Heart left ventricle (tissue), 16 donors: ENCODE measurements at regions of chr6 and their contacts with region 1.

Region 1: GRCh38 chr6:154276810-154277628 is 79.6 kb downstream of the IPCEF1 start:
- DNase-seq: no peak
- ATAC-seq: peak in 1 of 4 donors; percentile 53
- H3K4me3 ChIP-seq: peak overlapping the region in 1 of 12 donors; percentile 19
- H3K27ac ChIP-seq: no peak overlapping the region
- H3K4me1 ChIP-seq: peaks cover 0 to 19% (median 0%) of the 10 kb centered on the region in 12 donors
- H3K27me3 ChIP-seq: no peaks in the 10 kb centered on the region
- CTCF ChIP-seq: peak; percentile 44 to 71 (median 58)
- POLR2A ChIP-seq: no peak

Region 2: GRCh38 chr6:154370545-154370944 is 93.5 kb after region 1 on chr6:
- intact Hi-C with region 1: loop called in 1 of 10 experiments (anchors 10 kb)
- DNase-seq: no peak
- ATAC-seq: peak; percentile 47 to 70 (median 54)
- H3K4me3 ChIP-seq: no peak overlapping the region
- H3K27ac ChIP-seq: no peak overlapping the region
- H3K4me1 ChIP-seq: peaks cover 0 to 7% (median 0%) of the 10 kb centered on the region in 12 donors
- H3K27me3 ChIP-seq: no peaks in the 10 kb centered on the region
- CTCF ChIP-seq: peak in 11 of 12 donors; percentile 17 to 56 (median 41)
- POLR2A ChIP-seq: no peak